IMR-90 (cell line): ENCODE measurements at regions of chr14 and their contacts with region 1.

Region 1: DNA sequence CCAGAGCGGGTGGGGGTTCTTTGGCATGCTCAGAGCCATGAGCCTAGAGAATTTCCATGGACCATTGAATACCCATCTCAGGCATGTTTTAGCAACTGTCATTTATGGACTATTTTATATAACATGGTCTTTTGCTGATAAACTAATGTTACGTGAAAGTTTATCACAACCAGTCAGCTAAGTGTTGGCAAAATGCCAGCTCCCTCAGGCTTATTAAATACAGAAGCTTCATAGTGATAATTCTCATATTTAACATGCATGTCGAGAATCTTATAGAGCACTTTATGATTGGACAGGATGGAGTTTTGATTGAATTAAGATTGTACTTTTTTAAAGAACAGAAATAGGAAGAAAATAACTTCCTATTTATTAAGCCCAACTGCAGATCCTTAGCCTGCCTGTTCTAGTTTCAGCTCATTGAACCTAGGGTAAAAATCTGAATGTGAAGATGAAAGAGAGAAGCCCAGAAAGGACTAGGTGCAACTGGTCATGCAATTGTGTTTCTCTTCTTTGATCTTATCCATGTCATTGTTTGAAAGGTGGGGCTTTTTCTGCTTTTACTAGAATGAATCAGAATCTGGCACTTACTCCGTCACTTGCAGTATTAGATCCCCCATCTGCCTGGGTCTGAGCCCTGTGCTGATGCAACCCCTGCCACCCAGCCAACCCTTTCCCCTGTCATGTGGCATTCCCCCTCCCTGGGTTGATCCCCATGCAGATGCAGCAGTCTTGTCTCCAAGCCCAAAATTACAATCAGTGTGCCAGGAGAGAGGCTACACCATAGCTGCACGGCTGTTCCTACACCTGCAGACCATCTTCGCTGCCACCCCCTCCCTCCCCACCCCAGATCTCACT is 134.6 kb upstream of the EVL start:
- DNase-seq: no peak
- ATAC-seq: no peak; the same call in 1 of the 2 replicates
- H3K4me3 ChIP-seq: no peak overlapping the region
- H3K27ac ChIP-seq: no peak overlapping the region
- H3K4me1 ChIP-seq: no peaks in the 10 kb centered on the region
- H3K27me3 ChIP-seq: no peaks in the 10 kb centered on the region
- CTCF ChIP-seq: no peak
- POLR2A ChIP-seq: no peak
- RAD21 ChIP-seq: no peak

Region 2: DNA sequence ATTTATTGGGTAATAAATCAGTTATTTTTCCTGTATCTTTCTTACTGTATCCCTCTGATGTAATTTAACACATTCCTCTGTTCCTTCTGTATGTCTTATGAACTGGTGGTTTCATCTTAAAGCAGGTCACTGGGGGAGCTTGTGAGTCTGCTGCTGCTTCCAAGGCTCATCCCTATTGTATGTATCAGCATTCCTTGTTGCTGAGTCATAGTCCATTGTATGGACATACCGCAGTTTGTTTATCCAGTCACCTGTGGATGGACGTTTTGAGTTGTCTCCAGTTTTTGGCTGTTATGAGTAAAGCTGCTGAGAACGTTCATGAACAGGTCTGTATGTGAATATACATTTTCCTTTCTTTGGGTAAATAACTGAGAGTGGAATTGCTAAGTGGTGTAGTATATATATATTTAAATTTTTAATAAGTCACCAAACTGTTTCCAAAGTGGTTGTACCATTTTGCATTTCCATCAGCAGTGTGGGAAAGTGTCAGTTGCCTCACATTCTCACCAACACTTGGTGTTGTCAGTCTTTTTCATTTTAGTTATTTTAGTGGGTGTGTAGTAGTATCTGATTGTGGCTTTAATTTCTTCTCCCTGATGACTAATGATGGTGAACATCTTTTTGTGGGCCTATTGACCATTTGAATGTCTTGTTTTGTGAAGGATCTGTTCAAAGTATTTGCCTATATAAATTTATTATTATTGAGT is 573.9 kb after region 1 on chr14:
- CTCF ChIA-PET with region 1: no interaction called
- POLR2A ChIA-PET with region 1: no interaction called
- dilution Hi-C with region 1: no loop called
- in situ Hi-C with region 1: no loop called
- intact Hi-C with region 1: loop called (anchors 10 kb)
- DNase-seq: peak; percentile 28
- ATAC-seq: no peak
- H3K4me3 ChIP-seq: no peak overlapping the region
- H3K27ac ChIP-seq: no peak overlapping the region
- H3K4me1 ChIP-seq: no peaks in the 10 kb centered on the region
- H3K27me3 ChIP-seq: no peaks in the 10 kb centered on the region
- CTCF ChIP-seq: no peak
- POLR2A ChIP-seq: no peak
- RAD21 ChIP-seq: no peak